Activated CD4-positive, alpha-beta T cell treated with anti-CD3 and anti-CD28 coated beads for 36 hours (primary cell): ENCODE measurements at regions of chr4 and their contacts with region 1.

Region 1: GRCh38 chr4:163544407-163545038 is 50.0 kb downstream of the TMA16 start:
- DNase-seq: peak; percentile 79
- ATAC-seq: peak; percentile 92
- H3K4me3 Mint-ChIP-seq: no peak overlapping the region
- H3K27ac Mint-ChIP-seq: no peak overlapping the region
- H3K4me1 Mint-ChIP-seq: peaks cover 3% of the 10 kb centered on the region
- H3K27me3 Mint-ChIP-seq: no peaks in the 10 kb centered on the region

Region 2: GRCh38 chr4:163048447-163048846 is 496.1 kb before region 1 on chr4:
- CTCF ChIA-PET with region 1: interaction called, 3 read pairs
- POLR2A ChIA-PET with region 1: no interaction called
- intact Hi-C with region 1: loop called in 1 of 2 experiments (anchors 5 kb)
- DNase-seq: peak; percentile 35
- ATAC-seq: no peak
- H3K4me3 Mint-ChIP-seq: no peak overlapping the region
- H3K27ac Mint-ChIP-seq: no peak overlapping the region
- H3K4me1 Mint-ChIP-seq: no peaks in the 10 kb centered on the region
- H3K27me3 Mint-ChIP-seq: peaks cover 4% of the 10 kb centered on the region

Region 3: DNA sequence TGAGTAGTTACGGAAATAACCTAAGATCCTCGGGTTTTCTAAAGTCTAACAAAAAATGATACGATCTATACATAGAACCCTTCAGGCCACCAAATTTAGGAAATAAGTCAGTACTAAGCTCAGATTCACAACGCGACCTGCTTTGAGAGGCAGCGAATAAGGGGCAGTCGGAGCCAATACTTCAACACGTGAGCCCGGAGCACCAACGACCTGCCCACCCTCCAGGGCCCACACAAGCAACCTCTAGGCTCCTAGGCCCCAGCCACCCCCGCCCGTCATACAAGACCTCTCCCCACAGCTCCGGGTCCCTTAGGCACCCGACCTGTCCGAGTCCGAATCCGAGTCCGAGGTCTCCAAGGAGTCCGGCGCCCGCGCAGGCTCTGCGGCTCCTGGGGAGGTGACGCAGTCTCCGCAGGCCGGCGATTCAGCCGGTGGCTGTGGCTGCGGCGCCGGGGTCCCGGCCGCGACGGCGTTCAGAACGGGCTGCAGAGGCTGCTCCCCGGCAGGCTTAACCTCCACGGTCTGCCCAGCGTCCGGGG is 378.4 kb before region 1 on chr4:
- CTCF ChIA-PET with region 1: no interaction called
- POLR2A ChIA-PET with region 1: no interaction called
- intact Hi-C with region 1: loop called (anchors 2 to 10 kb)
- DNase-seq: peak; percentile 73
- ATAC-seq: peak; percentile 65
- H3K4me3 Mint-ChIP-seq: peak overlapping the region; percentile 81
- H3K27ac Mint-ChIP-seq: peak overlapping the region; percentile 89
- H3K4me1 Mint-ChIP-seq: peaks cover 44% of the 10 kb centered on the region
- H3K27me3 Mint-ChIP-seq: no peaks in the 10 kb centered on the region

Region 4: DNA sequence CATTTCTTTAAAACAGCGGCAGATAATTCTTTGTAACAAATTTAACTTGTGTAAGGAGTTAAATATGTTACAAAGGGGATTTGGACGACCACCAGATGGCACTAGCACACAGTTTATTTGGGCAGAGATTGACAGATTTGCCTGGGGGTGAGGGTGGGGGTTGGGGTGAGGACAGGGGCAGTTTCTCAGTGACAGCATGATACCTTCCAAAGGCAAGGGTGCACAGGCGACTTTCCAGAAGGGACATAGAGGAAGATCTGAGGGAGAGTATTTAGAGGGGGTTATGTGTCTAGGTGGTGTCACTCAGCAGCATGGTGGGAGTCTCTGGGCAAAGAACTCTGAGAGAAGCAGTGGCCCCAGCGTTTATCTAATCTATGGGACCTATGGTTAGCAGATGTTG is 59.6 kb before region 1 on chr4:
- CTCF ChIA-PET with region 1: interaction called, 7 read pairs
- POLR2A ChIA-PET with region 1: no interaction called
- intact Hi-C with region 1: loop called (anchors 1 kb)
- DNase-seq: peak; percentile 73
- ATAC-seq: peak; percentile 55
- H3K4me3 Mint-ChIP-seq: no peak overlapping the region
- H3K27ac Mint-ChIP-seq: no peak overlapping the region
- H3K4me1 Mint-ChIP-seq: no peaks in the 10 kb centered on the region
- H3K27me3 Mint-ChIP-seq: peaks cover 4% of the 10 kb centered on the region

Region 5: DNA sequence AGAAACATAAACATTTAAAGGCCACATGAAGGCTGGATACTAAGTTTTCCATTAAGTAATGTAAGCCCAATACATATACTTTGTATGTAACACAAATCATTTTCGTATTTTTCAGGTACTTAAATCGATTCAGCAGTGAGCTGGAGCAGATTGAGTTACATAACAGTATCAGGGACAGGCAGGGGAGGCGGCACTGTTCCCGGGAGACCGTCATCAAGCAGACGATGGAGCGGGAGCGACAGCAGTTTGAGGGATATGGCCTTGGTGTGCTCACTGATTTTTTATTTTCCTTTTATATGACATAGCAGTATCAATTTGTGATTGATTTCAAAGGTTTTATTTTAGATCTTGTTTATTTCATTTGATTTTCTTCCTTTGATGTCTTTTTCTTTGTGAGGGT is 29.3 kb before region 1 on chr4:
- CTCF ChIA-PET with region 1: interaction called, 18 read pairs
- POLR2A ChIA-PET with region 1: no interaction called
- intact Hi-C with region 1: no loop called
- DNase-seq: no peak
- ATAC-seq: no peak
- H3K4me3 Mint-ChIP-seq: no peak overlapping the region
- H3K27ac Mint-ChIP-seq: no peak overlapping the region
- H3K4me1 Mint-ChIP-seq: no peaks in the 10 kb centered on the region
- H3K27me3 Mint-ChIP-seq: no peaks in the 10 kb centered on the region

Region 6: DNA sequence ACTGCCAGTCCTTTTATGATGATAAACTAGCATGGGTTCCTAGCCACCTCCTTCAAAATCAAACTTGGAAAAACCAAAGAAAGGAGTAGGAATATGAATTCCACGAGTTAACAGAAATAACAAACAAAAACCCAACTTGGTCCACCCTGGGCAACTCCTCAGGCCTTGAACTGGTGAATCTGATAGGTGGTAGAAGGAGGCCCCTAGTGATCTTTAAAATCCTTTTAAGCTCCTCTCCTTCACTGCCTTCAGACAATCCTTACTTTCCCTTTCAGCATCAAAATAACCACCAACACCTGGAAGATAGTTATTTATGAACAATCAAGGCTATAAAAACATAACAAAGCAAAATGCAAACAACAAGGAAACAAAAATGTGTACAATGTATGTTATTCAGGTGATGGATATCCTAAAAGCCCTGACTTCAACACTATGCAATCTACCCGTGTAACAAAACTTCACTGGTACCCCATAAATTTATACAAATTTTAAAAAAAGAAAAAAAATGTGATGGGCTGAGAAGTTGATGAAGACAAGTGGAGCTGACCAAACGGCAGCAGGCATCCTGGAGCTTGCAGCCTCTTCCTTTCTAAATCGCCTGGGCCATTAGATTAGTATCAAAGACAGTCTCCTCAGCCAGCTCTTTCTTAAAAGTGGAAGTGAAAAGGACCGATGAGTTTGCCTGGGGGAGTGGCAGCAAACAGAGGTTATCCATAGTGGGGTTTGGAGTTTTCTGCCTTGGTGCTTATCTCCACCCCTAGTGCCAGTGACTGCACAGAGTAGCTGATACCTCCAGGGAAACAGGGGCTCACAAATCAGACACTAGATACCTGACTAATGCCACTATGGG is 129.6 kb after region 1 on chr4:
- CTCF ChIA-PET with region 1: interaction called, 125 read pairs
- POLR2A ChIA-PET with region 1: no interaction called
- intact Hi-C with region 1: no loop called
- DNase-seq: no peak
- ATAC-seq: no peak
- H3K4me3 Mint-ChIP-seq: no peak overlapping the region
- H3K27ac Mint-ChIP-seq: no peak overlapping the region
- H3K4me1 Mint-ChIP-seq: peaks cover 18% of the 10 kb centered on the region
- H3K27me3 Mint-ChIP-seq: no peaks in the 10 kb centered on the region